Panc1 (cell line): ENCODE measurements at regions of chr11 and their contacts with region 1.

Region 1: DNA sequence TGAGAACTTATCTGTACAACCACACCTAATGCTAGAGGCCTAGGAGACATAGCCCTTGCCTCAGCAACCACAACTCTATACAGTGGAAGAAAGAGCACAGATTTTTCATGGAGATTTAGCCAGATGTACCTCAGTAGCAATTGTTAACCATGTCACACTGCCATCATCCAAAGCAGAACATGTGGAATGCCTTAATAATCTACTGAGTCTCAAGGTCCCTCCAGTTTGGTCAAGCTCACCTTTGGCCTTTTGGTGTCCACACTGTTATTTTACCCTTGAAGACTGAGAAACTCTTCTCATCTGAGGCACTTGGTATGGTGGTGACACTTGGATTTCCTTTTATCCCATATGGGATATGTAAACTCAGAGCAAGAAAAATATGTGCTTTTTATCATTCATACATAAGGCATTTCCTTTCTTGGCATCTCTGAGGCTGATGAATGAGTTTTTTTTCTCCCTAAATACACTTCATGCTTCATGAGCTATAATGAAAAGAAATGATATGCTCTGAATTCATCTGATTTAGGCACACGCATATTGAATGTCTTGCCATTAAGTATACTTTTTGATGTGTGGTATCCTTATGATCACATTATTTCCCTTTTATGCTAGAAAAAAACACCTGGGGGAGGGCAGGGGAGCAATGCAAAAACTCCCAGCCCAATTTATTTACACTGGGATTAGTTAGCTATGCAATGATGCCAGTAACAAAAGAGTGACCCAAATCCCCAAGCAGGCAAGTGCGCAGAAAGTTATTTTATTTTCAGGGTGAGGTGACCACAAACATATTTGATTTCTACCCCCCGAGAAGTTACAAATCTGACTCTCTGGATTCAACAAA is 63.3 kb upstream of the ME3 start:
- DNase-seq: peak; percentile 90
- ATAC-seq: peak; percentile 84
- H3K4me3 ChIP-seq: no peak overlapping the region
- H3K27ac ChIP-seq: peak overlapping the region; percentile 99
- H3K4me1 ChIP-seq: peaks cover 56% of the 10 kb centered on the region
- H3K27me3 ChIP-seq: no peaks in the 10 kb centered on the region
- CTCF ChIP-seq: no peak

Region 2: DNA sequence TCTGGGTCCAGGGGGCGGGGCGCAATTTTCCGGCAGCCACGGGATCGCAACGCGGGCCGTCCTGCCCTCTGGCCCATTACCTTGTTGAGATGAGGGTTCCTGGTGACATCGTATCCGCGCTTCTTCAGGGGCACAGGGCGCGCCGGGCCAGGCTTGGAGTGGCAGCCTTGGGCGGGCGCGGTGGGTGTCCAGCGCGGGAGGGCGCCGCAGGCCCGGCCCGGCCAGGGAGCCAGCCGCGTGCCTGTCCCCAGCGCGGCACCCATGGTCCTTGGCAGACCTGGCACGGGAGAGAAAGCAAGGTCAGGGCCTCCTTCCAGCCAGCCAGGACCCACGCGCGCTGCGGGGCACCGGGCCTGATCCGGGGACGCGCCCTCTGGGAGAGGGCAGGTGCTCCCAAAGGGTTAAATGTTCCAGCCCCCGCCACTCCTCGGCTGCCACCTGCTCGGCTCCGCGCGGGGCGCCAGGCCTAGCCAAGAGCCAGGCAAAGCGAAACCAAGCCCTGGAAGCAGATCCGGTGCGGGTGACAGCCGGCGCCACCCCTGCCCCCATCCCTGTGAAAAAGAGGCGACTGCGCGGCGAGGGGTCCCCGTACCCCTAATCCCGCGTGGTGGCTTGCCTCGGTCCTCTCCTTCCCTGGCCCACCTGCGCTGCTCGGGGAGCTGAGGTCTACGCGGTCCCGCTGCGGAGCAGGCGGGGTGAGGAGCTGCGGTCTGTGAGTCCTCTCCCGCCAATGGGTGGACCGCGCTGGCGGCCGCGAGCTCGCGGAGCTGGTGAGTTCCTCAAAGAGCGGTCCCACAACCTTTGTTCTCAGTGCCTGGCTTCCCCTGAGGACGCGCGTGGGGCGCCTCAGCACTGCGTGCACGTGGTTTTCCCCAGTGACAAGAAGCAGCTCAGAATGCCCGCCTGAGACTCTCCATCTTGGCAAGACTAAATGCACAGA is 63.7 kb before region 1 on chr11 and contains the start of gene ME3:
- CTCF ChIA-PET with region 1: no interaction called
- POLR2A ChIA-PET with region 1: interaction called, 3 read pairs
- in situ Hi-C with region 1: no loop called
- intact Hi-C with region 1: loop called (anchors 5 kb)
- DNase-seq: no peak
- ATAC-seq: peak; percentile 86
- H3K4me3 ChIP-seq: peak within 1 kb of the TSS; percentile 67 to 77
- H3K27ac ChIP-seq: peak within 1 kb of the TSS; percentile 99
- H3K4me1 ChIP-seq: peaks cover 70% of the 10 kb centered on the region
- H3K27me3 ChIP-seq: no peaks in the 10 kb centered on the region
- CTCF ChIP-seq: peak; percentile 40
- total RNA-seq, gene ME3: 35.3 TPM

Region 3: GRCh38 chr11:86990515-86990914 is 254.8 kb after region 1 on chr11:
- CTCF ChIA-PET with region 1: no interaction called
- POLR2A ChIA-PET with region 1: no interaction called
- in situ Hi-C with region 1: no loop called
- intact Hi-C with region 1: no loop called
- DNase-seq: no peak
- ATAC-seq: peak; percentile 64
- H3K4me3 ChIP-seq: no peak overlapping the region
- H3K27ac ChIP-seq: no peak overlapping the region
- H3K4me1 ChIP-seq: peaks cover 6% of the 10 kb centered on the region; the same call in 1 of the 2 replicates
- H3K27me3 ChIP-seq: no peaks in the 10 kb centered on the region
- CTCF ChIP-seq: no peak